Activated T-helper 1 cell treated with anti-CD3 and anti-CD28 coated beads, Interleukin-12 subunit alpha, Interleukin-12 subunit beta, Interleukin-2, Interleukin-4 antibody, amounts not matched to agents 30 ng/mL and 10 ng/mL and 1 ng/mL, durations not matched to agents 14 hours and 24 hours and 36 hours (primary cell): ENCODE measurements at regions of chr4 and their contacts with region 1.

Region 1: DNA sequence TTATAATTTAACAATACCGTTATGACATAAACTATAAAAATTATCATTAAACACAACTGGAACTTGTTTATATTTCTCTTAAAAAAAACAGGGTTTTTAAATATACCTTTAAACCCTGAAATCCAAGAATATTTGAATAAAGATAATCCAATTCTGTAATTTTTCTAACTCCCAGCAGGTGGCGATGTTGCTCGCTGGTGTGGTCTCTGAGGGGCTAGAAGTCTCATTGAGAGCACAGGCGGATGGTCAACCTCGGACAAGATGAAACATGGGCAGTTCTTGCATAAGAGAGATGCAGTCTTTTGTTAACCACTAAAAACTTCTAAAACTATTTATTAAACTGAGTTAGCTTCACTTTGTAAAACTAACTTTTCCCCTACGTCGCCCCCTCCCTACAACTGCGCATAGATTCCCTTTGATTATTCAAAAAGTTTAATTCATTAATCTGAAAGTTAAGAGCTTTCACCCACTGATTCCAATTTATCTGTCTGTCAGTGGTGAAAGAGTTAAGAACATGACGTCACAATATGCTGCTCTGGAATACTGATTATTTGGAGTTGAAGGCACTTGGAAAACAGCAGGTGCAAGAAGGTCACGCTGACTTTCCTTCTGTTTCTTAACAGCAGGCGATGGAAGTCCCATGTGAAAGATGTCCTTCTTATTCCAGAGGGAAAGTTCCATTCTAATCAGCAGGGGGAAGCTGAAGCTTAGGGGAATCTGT is 29.5 kb downstream of the DMP1 start:
- DNase-seq: peak; percentile 2
- H3K4me3 Mint-ChIP-seq: no peak overlapping the region
- H3K27ac Mint-ChIP-seq: no peak overlapping the region
- H3K4me1 Mint-ChIP-seq: no peaks in the 10 kb centered on the region
- H3K27me3 Mint-ChIP-seq: no peaks in the 10 kb centered on the region

Region 2: DNA sequence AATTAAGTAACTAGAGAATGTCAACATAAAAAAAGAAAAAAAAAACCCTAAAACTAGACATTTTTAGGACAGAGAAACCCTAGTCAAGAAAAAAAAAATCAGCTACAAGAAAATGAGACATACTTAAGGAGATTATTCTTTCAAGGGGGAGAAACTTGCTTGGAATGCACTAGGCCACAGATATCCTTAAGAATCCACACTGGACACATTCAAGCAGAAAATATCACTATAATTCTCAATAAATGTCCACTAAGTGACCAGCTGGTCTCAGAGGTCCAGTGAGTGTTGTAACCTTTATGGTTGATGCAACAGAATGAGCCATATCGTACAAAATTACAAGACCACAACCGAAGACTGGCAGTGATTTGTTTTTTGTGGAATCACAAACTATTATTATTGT is 104.2 kb after region 1 on chr4:
- intact Hi-C with region 1: no loop called
- DNase-seq: no peak
- H3K4me3 Mint-ChIP-seq: no peak overlapping the region
- H3K27ac Mint-ChIP-seq: no peak overlapping the region
- H3K4me1 Mint-ChIP-seq: no peaks in the 10 kb centered on the region
- H3K27me3 Mint-ChIP-seq: no peaks in the 10 kb centered on the region

Region 3: GRCh38 chr4:87838890-87839591 is 159.4 kb after region 1 on chr4:
- intact Hi-C with region 1: loop called (anchors 2 kb)
- DNase-seq: no peak
- H3K4me3 Mint-ChIP-seq: no peak overlapping the region
- H3K27ac Mint-ChIP-seq: no peak overlapping the region
- H3K4me1 Mint-ChIP-seq: no peaks in the 10 kb centered on the region
- H3K27me3 Mint-ChIP-seq: peaks cover 24% of the 10 kb centered on the region

Region 4: GRCh38 chr4:87973283-87974169 is 293.9 kb after region 1 on chr4:
- intact Hi-C with region 1: loop called (anchors 2 kb)
- DNase-seq: no peak
- H3K4me3 Mint-ChIP-seq: no peak overlapping the region
- H3K27ac Mint-ChIP-seq: no peak overlapping the region
- H3K4me1 Mint-ChIP-seq: peaks cover 15% of the 10 kb centered on the region
- H3K27me3 Mint-ChIP-seq: peaks cover 53% of the 10 kb centered on the region